ENCODE measurements at regions of chr2 and their contacts with region 1.

Region 1: DNA sequence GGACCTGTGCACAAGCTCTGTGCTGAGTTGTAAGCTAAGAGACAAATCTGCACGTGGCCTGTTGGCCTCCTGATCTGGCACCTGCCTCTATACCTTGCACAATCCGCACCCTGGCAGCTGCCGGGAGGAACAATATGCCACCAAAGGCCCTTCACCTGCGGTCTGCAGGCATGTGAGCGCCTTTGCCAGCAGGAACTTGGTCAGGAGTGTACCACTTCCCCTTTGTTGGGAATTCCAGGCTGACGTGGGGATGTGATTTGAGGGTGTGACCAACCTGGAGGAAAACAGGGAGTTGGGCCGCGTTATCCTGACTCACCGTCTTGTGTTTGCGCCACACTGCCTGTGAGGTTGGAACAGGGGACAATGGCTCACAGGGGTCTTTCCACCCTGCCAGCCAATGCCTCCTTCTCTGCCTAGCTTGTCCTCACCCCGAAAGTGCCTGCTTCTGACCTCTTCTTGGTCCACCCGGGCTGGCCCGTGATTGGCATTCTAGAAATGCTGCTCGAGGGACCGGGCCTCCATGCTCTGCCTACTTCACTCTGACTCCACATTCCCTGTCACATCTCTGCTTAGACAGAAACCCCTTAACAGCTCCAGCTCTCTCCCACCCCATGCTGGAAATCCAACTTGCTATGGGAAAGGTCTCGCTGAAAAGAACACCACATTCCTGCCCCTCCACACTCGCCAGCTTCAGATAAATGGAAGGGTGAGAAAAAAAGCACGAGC is 67.1 kb upstream of the MAP4K4 start:
- DNase-seq: peak; percentile 99
- H3K4me3 ChIP-seq: no peak overlapping the region
- H3K27ac ChIP-seq: peak overlapping the region; percentile 68
- H3K4me1 ChIP-seq: peaks cover 13% of the 10 kb centered on the region
- H3K27me3 ChIP-seq: no peaks in the 10 kb centered on the region
- CTCF ChIP-seq: no peak

Region 2: GRCh38 chr2:101473911-101474701 is 156.3 kb before region 1 on chr2:
- CTCF ChIA-PET with region 1: no interaction called
- dilution Hi-C with region 1: no loop called
- in situ Hi-C with region 1: no loop called
- intact Hi-C with region 1: loop called (anchors 5 kb)
- DNase-seq: peak; percentile 24
- H3K4me3 ChIP-seq: peak overlapping the region; percentile 56 to 59 (median 57)
- H3K27ac ChIP-seq: peak overlapping the region; percentile 37
- H3K4me1 ChIP-seq: peaks cover 14% of the 10 kb centered on the region
- H3K27me3 ChIP-seq: no peaks in the 10 kb centered on the region
- CTCF ChIP-seq: no peak

Region 3: DNA sequence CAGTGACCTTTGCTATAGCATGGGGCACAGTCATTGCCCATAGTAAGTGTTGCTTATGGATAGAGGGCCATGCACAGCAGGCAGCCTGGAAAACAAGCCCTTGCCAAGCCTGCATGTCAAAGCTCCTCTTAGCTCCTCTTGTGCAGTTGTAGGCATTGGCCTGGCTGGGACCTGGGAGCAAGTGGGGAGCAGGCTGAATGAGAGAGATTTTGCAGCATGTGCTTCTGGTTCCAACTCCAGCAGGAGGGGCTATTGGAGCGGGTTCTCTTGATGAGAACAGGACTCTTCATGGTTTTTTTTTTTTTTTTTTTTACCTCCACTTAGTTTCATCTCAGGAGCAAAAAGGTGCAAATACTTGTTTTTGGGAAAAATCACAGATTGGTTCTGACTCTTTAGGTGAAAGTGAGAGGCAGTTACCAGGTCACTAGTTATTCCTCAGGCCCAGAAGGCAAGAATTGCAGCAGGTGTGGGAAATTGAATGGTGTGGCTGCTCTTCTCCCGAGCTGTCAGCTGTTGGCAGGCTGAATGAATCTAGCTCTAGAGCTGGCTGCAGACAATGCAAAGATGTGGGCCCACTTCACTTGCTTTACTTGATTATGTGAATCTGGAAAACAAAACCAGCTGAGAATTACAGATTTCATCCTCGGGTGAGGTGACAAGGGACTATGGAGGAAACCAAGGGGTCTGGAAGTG is 163.0 kb after region 1 on chr2:
- CTCF ChIA-PET with region 1: no interaction called
- dilution Hi-C with region 1: no loop called
- in situ Hi-C with region 1: no loop called
- intact Hi-C with region 1: no loop called
- DNase-seq: no peak
- H3K4me3 ChIP-seq: no peak overlapping the region
- H3K27ac ChIP-seq: no peak overlapping the region
- H3K4me1 ChIP-seq: peaks cover 4% of the 10 kb centered on the region
- H3K27me3 ChIP-seq: no peaks in the 10 kb centered on the region
- CTCF ChIP-seq: peak in 1 of 2 donors; percentile 15